Posterior vena cava (tissue), 2 donors: ENCODE measurements at regions of chr16 and their contacts with region 1.

Region 1: GRCh38 chr16:78985829-78986605 is 614.5 kb downstream of the MAF start:
- DNase-seq: no peak

Region 2: DNA sequence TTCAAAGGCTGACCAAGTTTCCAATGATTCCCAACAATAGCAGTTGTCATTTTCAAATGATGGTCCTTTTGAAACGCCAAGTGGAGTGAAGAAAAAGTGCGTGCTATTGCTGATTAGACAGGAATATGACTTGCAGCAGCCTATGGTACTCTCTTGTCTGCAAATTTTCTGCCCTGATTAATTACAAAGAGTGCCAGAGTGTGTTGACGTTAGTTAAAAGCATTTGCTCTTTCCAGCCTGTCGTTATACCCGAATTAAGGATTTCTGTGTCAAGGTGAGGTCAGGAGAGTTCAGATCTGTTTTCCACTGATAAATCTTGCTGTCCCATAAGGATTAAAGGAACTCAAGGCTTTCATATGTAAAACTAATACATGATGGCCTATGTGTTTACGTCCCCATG is 1476.2 kb before region 1 on chr16:
- intact Hi-C with region 1: no loop called
- DNase-seq: no peak

Region 3: DNA sequence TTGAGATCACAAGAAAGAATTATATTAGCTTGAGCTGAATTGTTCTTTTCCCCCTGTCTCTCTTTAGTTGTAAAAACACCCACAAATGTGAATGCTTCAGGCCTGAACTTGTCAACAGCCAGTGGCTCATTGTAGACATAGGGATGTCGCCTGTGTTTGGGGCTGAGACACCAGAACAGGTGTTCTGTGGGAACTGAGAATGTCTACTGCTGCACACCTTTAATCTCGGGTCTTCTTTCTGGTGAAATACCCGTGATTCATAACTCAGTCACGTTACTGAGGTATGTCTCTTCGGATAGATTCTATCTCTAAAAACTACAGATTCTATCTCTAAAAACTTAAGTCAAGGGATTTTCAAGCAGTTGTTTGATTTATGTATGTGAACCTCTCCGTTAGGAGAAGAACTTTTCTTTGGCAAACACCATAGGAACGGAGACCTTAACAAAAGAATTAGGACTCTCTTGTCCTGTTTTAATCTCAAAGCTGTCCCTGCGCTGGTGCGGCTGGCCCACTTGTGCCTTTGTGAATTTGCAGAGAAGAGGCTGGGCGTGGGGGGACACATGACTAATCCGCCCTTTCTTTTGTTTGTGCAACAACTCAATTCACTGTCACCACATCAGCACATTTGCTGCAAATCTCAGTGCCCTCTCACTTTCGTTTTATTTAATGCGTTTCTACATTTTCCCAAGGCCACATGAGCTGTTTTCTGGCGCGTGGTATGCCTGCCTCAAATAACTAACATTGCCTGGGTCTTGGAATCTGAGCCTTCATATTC is 28.5 kb before region 1 on chr16:
- intact Hi-C with region 1: loop called in 1 of 2 experiments (anchors 1 kb)
- DNase-seq: no peak